CD4-positive, alpha-beta memory T cell (primary cell): ENCODE measurements at regions of chr17 and their contacts with region 1.

Region 1: DNA sequence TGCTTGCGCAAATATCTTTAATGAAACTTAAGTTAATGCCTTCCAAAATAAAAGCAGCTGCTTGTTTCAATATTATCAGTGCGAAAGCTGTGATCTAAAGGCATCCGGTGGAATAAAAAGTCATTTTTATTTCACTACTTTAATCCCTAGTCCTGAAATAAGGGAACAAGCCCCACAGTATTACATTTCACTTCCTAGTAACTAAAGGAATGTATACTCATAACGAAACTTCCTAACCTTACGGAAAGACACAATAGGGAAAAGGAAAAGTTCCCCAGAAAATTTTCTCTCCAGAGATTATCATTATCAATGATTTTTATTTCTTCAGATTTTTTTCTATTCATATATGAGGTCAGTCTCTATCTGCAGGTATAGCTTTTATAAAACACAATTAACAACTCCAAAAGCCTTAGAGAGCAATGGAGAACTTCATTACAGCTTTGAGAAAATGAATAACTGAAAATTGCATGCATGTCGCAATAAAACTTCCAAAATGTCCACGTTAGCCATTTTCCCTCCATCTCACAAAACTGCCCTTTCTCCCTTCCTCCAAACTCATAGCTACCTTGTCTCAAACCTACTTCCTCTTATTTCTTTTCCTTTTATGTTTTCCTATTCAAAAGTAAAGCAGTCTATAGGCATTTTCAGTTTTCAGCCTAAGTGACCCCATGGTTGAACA is 154.3 kb upstream of the MED13 start:
- DNase-seq: no peak
- H3K4me3 ChIP-seq: no peak overlapping the region
- H3K4me3 Mint-ChIP-seq: no peak overlapping the region
- H3K27ac ChIP-seq: no peak overlapping the region
- H3K27ac Mint-ChIP-seq: no peak overlapping the region
- H3K4me1 ChIP-seq: no peaks in the 10 kb centered on the region
- H3K4me1 Mint-ChIP-seq: no peaks in the 10 kb centered on the region
- H3K27me3 ChIP-seq: no peaks in the 10 kb centered on the region
- H3K27me3 Mint-ChIP-seq: peaks cover 0 to 5% of the 10 kb centered on the region in 2 donors

Region 2: GRCh38 chr17:61635913-61636432 is 583.4 kb before region 1 on chr17:
- CTCF ChIA-PET with region 1: no interaction called
- POLR2A ChIA-PET with region 1: no interaction called
- intact Hi-C with region 1: loop called (anchors 10 kb)
- DNase-seq: peak; percentile 33 to 50 (median 43)
- H3K4me3 ChIP-seq: no peak overlapping the region
- H3K4me3 Mint-ChIP-seq: no peak overlapping the region
- H3K27ac ChIP-seq: no peak overlapping the region
- H3K27ac Mint-ChIP-seq: no peak overlapping the region
- H3K4me1 ChIP-seq: no peaks in the 10 kb centered on the region
- H3K4me1 Mint-ChIP-seq: no peaks in the 10 kb centered on the region
- H3K27me3 ChIP-seq: no peaks in the 10 kb centered on the region
- H3K27me3 Mint-ChIP-seq: peaks cover 32 to 36% of the 10 kb centered on the region in 2 donors

Region 3: GRCh38 chr17:62179534-62180151 is 39.7 kb before region 1 on chr17:
- CTCF ChIA-PET with region 1: no interaction called
- POLR2A ChIA-PET with region 1: no interaction called
- intact Hi-C with region 1: no loop called
- DNase-seq: no peak
- H3K4me3 ChIP-seq: no peak overlapping the region
- H3K4me3 Mint-ChIP-seq: no peak overlapping the region
- H3K27ac ChIP-seq: no peak overlapping the region
- H3K27ac Mint-ChIP-seq: no peak overlapping the region
- H3K4me1 ChIP-seq: no peaks in the 10 kb centered on the region
- H3K4me1 Mint-ChIP-seq: no peaks in the 10 kb centered on the region
- H3K27me3 ChIP-seq: no peaks in the 10 kb centered on the region
- H3K27me3 Mint-ChIP-seq: no peaks in the 10 kb centered on the region